ENCODE measurements at regions of chr19 and their contacts with region 1.

Region 1: GRCh38 chr19:48363810-48364563 is at the starts of genes SYNGR4 and TMEM143:
- DNase-seq: peak; percentile 96 to 100 (median 98)
- ATAC-seq: peak; percentile 86
- H3K4me3 ChIP-seq: peak within 1 kb of the TSS; percentile 94
- H3K4me3 Mint-ChIP-seq: peak within 1 kb of the TSS; percentile 90
- H3K27ac ChIP-seq: peak within 1 kb of the TSS; percentile 77 to 87
- H3K27ac Mint-ChIP-seq: peak within 1 kb of the TSS; percentile 90
- H3K4me1 ChIP-seq: peaks cover 22% of the 10 kb centered on the region
- H3K4me1 Mint-ChIP-seq: peaks cover 17% of the 10 kb centered on the region
- H3K27me3 ChIP-seq: no peaks in the 10 kb centered on the region
- H3K27me3 Mint-ChIP-seq: no peaks in the 10 kb centered on the region
- CTCF ChIP-seq: no peak
- total RNA-seq, gene SYNGR4: not detected
- total RNA-seq, gene TMEM143: 9.4 to 11.0 TPM

Region 2: GRCh38 chr19:46614114-46614722 is 1749.8 kb before region 1 on chr19:
- CTCF ChIA-PET with region 1: no interaction called
- POLR2A ChIA-PET with region 1: no interaction called
- intact Hi-C with region 1: loop called in 1 of 2 experiments (anchors 10 kb)
- DNase-seq: peak; percentile 71 to 89 (median 77)
- ATAC-seq: peak; percentile 58
- H3K4me3 ChIP-seq: no peak overlapping the region
- H3K4me3 Mint-ChIP-seq: peak overlapping the region; percentile 56
- H3K27ac ChIP-seq: peak overlapping the region in 1 of 2 donors; percentile 41
- H3K27ac Mint-ChIP-seq: peak overlapping the region; percentile 93
- H3K4me1 ChIP-seq: peaks cover 90% of the 10 kb centered on the region
- H3K4me1 Mint-ChIP-seq: peaks cover 74% of the 10 kb centered on the region
- H3K27me3 ChIP-seq: no peaks in the 10 kb centered on the region
- H3K27me3 Mint-ChIP-seq: no peaks in the 10 kb centered on the region
- CTCF ChIP-seq: peak; percentile 90

Region 3: GRCh38 chr19:48321622-48322591 is 42.1 kb before region 1 on chr19:
- CTCF ChIA-PET with region 1: interaction called, 3 read pairs
- POLR2A ChIA-PET with region 1: interaction called, 53 read pairs
- intact Hi-C with region 1: no loop called
- DNase-seq: peak; percentile 98 to 100 (median 100)
- ATAC-seq: peak; percentile 61
- H3K4me3 ChIP-seq: peak overlapping the region; percentile 76
- H3K4me3 Mint-ChIP-seq: peak overlapping the region; percentile 93
- H3K27ac ChIP-seq: peak overlapping the region; percentile 99 to 100
- H3K27ac Mint-ChIP-seq: peak overlapping the region; percentile 99
- H3K4me1 ChIP-seq: peaks cover 62% of the 10 kb centered on the region
- H3K4me1 Mint-ChIP-seq: peaks cover 68% of the 10 kb centered on the region
- H3K27me3 ChIP-seq: no peaks in the 10 kb centered on the region
- H3K27me3 Mint-ChIP-seq: no peaks in the 10 kb centered on the region
- CTCF ChIP-seq: no peak

Region 4: DNA sequence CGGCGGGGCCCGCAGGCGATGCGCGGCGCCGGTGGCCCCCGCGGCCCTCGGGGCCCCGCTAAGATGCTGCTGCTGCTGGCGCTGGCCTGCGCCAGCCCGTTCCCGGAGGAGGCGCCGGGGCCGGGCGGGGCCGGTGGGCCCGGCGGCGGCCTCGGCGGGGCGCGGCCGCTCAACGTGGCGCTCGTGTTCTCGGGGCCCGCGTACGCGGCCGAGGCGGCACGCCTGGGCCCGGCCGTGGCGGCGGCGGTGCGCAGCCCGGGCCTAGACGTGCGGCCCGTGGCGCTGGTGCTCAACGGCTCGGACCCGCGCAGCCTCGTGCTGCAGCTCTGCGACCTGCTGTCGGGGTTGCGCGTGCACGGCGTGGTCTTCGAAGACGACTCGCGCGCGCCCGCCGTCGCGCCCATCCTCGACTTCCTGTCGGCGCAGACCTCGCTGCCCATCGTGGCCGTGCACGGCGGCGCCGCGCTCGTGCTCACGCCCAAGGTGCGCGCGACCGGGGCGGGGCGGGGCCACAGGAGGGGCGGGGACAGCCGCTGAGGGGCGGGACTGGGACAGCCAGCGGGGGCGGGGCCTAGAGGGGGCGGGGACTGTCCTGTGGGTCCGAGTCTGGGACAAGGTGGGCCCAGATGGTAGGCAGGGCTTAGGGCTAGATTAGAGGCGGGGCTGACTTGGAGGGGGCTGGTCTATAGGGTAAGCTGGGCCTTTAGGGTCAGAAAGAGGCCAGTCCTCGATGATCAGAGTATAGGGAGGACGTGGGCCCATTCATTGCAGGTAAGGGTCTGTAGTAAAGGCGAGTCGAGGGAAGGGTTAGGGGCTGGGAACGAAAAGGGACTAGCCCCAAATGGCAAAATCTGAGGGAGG is 34.6 kb after region 1 on chr19:
- CTCF ChIA-PET with region 1: no interaction called
- POLR2A ChIA-PET with region 1: interaction called, 6 read pairs
- intact Hi-C with region 1: loop called in 1 of 2 experiments (anchors 5 kb)
- DNase-seq: peak; percentile 74 to 93 (median 84)
- ATAC-seq: peak; percentile 69
- H3K4me3 ChIP-seq: peak overlapping the region; percentile 53
- H3K4me3 Mint-ChIP-seq: peak overlapping the region; percentile 56
- H3K27ac ChIP-seq: no peak overlapping the region
- H3K27ac Mint-ChIP-seq: peak overlapping the region; percentile 64
- H3K4me1 ChIP-seq: peaks cover 62% of the 10 kb centered on the region
- H3K4me1 Mint-ChIP-seq: peaks cover 44% of the 10 kb centered on the region
- H3K27me3 ChIP-seq: peaks cover 30 to 33% of the 10 kb centered on the region in 2 experiments
- H3K27me3 Mint-ChIP-seq: peaks cover 34% of the 10 kb centered on the region
- CTCF ChIP-seq: no peak

Region 5: DNA sequence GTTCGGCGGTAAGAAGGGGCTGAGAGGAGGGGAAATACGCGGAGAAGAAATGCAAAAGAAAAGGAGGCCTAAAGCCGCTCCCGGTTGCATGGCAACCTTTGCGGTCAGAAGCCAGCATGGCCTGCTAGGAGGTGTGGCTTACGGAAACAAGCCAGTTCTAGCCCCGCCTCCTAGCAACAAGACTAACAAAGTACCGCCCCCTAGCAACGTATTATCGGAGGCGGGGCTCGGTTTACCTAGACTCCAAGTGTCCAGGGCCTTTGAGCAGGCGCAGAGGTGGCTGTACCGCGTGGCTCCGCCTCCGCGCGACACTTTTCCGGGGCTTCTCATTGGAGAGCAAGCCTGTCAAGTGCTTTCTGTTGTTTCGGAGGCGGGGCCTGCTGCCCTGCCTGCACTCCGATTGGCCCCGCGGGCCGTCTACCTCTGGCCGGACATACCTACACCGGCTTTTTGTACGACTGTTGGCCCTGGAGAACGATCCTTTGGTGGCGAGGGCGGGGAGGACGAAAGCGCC is 104.8 kb after region 1 on chr19:
- CTCF ChIA-PET with region 1: no interaction called
- POLR2A ChIA-PET with region 1: no interaction called
- intact Hi-C with region 1: loop called in 1 of 2 experiments (anchors 2 kb)
- DNase-seq: peak; percentile 98 to 100 (median 99)
- ATAC-seq: peak; percentile 89
- H3K4me3 ChIP-seq: peak overlapping the region; percentile 96
- H3K4me3 Mint-ChIP-seq: peak overlapping the region; percentile 90
- H3K27ac ChIP-seq: peak overlapping the region; percentile 25 to 79
- H3K27ac Mint-ChIP-seq: peak overlapping the region; percentile 82
- H3K4me1 ChIP-seq: peaks cover 22% of the 10 kb centered on the region
- H3K4me1 Mint-ChIP-seq: peaks cover 21% of the 10 kb centered on the region
- H3K27me3 ChIP-seq: no peaks in the 10 kb centered on the region
- H3K27me3 Mint-ChIP-seq: no peaks in the 10 kb centered on the region
- CTCF ChIP-seq: no peak

Region 6: DNA sequence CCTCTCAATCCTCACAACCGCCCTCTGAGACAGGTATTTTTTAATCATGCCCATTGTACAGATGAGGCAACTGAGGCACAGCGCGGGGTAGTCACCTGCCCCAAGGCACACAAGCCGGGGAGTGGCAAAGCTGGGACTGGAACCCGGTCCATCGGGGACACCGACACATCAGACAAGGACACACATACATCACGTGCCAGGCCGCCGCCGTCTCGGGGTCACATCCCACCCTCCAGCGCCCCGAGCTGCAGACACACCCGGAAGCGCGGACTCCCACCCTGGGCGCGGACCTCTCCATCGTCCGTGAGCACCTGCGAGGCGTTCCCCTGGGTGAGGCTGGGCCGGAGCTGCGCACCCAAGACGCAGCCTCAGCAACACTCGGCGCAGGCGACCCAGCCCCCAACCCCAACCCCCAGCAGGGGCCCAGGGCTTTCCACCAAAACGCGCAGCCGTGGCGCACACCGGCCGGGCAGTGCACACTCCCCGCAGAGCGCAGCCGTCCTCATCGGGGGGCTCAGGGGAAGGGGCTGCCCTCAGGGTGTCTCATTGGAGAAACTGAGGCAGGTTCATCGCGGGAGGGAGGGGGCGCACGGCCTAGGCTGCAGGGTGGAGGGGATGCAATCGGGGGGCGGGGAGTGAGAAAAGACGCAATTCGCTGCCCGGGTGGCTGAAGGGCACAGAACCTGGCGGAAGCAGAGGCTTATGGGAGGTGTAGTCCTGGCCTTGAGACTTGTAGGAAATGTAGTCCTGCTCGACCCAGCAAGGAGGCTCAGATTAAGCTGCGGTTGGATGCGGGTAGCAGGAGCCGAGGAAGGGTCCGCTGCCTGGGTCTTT is 149.5 kb after region 1 on chr19:
- CTCF ChIA-PET with region 1: no interaction called
- POLR2A ChIA-PET with region 1: interaction called, 3 read pairs
- intact Hi-C with region 1: loop called in 1 of 2 experiments (anchors 5 kb)
- DNase-seq: peak; percentile 57 to 89 (median 75)
- ATAC-seq: peak; percentile 59
- H3K4me3 ChIP-seq: peak overlapping the region; percentile 74
- H3K4me3 Mint-ChIP-seq: no peak overlapping the region
- H3K27ac ChIP-seq: peak overlapping the region; percentile 36 to 68
- H3K27ac Mint-ChIP-seq: no peak overlapping the region
- H3K4me1 ChIP-seq: peaks cover 42% of the 10 kb centered on the region
- H3K4me1 Mint-ChIP-seq: peaks cover 15% of the 10 kb centered on the region
- H3K27me3 ChIP-seq: no peaks in the 10 kb centered on the region
- H3K27me3 Mint-ChIP-seq: no peaks in the 10 kb centered on the region
- CTCF ChIP-seq: no peak

Region 7: GRCh38 chr19:48660854-48661731 is 297.1 kb after region 1 on chr19:
- CTCF ChIA-PET with region 1: no interaction called
- POLR2A ChIA-PET with region 1: no interaction called
- intact Hi-C with region 1: no loop called
- DNase-seq: peak; percentile 60 to 92 (median 70)
- ATAC-seq: peak; percentile 91
- H3K4me3 ChIP-seq: peak overlapping the region; percentile 21
- H3K4me3 Mint-ChIP-seq: peak overlapping the region; percentile 73
- H3K27ac ChIP-seq: peak overlapping the region; percentile 42 to 46
- H3K27ac Mint-ChIP-seq: peak overlapping the region; percentile 82
- H3K4me1 ChIP-seq: peaks cover 16% of the 10 kb centered on the region
- H3K4me1 Mint-ChIP-seq: peaks cover 9% of the 10 kb centered on the region
- H3K27me3 ChIP-seq: no peaks in the 10 kb centered on the region
- H3K27me3 Mint-ChIP-seq: no peaks in the 10 kb centered on the region
- CTCF ChIP-seq: no peak

Measured in CD4-positive, alpha-beta T cell (primary cell).